Activated CD4-positive, alpha-beta T cell treated with anti-CD3 and anti-CD28 coated beads for 36 hours (primary cell): ENCODE measurements at regions of chr12 and their contacts with region 1.

Region 1: DNA sequence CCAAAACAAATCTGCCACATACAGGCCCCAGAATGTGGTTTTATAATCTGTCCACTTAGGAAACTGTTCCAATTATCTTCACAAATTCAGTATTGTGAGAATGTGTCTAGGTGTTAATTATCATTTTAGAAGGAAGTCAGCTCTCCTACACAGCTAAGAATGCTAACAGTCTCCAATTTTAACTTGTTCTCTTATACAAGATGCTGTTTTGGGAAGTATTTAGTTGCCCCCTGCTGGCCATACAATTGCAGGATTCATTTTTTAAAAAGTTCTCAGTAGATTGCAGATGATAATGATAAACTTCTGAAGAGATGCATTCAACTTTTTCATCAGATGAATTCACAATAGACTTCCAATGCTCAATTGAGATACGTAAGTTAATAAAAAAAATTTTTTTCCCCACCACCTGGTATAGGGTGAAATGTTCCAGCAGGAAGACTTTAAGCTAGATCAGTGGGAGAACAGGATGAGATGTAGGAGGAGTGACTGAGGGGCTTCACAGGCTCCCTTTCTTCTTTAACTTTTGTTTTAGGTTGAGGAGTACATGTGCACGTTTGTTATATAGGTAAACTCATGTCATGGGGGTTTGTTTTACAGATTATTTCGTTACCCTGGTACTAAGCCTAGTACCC is 27.3 kb upstream of the OSBPL8 start:
- DNase-seq: peak; percentile 44
- ATAC-seq: no peak
- H3K4me3 Mint-ChIP-seq: no peak overlapping the region
- H3K27ac Mint-ChIP-seq: no peak overlapping the region
- H3K4me1 Mint-ChIP-seq: no peaks in the 10 kb centered on the region
- H3K27me3 Mint-ChIP-seq: no peaks in the 10 kb centered on the region

Region 2: DNA sequence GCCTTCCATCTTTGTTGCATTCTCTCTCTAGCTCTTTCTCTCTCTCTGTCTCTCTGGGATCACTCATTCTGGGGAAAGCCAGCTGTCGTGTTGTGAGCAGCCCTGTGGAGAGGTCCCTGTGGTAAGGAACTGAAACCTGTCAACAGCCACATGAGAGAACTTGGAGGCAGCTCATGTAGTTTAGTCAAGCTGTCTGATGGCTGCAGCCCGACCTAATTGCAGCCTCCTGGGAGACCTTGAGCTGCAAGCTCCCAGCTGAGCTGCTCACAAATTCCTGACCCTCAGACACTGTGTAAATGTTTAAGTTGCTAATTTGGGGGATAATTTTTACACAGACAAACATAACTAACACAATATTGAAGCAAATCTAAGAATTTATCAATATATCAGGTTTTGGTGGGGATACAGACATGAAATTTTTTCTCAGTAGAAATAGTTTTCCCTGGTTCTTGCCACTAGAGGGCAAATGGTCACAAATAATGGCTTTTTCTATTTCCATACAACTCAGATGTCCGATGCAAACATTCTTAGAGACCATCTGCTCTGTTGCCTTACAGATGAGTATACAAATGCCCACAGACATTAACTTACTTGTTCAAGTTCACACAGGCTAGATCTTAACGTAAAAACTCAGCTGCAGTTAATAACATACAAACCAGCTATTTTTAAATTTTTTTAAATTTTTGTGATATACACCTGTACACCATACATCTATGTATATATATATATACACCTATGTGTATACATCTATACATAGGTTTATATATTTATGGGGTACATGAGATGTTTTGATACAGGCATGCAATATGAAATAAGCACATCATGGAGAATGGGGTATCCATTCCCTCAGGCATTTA is 1060.0 kb before region 1 on chr12:
- CTCF ChIA-PET with region 1: no interaction called
- POLR2A ChIA-PET with region 1: no interaction called
- intact Hi-C with region 1: loop called in 1 of 2 experiments (anchors 5 kb)
- DNase-seq: peak; percentile 35
- ATAC-seq: peak; percentile 69
- H3K4me3 Mint-ChIP-seq: no peak overlapping the region
- H3K27ac Mint-ChIP-seq: no peak overlapping the region
- H3K4me1 Mint-ChIP-seq: peaks cover 6% of the 10 kb centered on the region
- H3K27me3 Mint-ChIP-seq: peaks cover 27% of the 10 kb centered on the region

Region 3: DNA sequence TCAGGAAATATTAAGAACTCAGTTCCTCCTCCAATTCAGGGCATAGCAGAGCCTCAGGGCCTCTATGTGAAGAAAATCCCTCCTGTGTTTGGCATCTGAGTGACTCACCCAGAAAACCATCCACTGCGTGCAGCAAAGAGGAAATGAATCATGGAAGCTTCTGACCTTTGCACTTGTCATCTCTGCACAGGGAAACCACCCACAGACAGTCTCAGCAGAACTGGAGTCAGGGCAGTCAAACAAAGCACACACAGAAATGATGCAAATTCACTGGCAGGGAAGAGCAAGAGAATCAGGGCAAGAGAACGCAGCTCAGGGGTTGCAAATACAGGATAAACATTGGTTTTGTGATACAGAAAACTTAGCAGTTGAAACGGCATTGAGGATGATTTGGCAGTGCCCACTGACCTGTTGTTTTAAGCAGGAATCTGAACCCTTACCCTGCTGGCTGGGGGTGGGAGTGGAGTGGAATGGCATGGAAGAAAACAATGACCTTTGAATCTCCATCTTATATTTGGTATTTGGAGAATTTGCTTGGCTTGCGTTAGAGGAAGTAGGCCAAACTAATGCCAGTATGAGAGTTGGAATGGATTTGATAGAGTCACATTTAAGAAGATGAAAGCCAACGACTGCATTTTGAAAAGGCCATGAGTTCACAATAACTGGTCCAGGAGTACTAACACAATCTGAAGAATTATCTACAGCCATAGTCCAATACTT is 608.8 kb before region 1 on chr12:
- CTCF ChIA-PET with region 1: no interaction called
- POLR2A ChIA-PET with region 1: no interaction called
- intact Hi-C with region 1: no loop called
- DNase-seq: peak; percentile 85
- ATAC-seq: peak; percentile 80
- H3K4me3 Mint-ChIP-seq: peak overlapping the region; percentile 59
- H3K27ac Mint-ChIP-seq: peak overlapping the region; percentile 100
- H3K4me1 Mint-ChIP-seq: peaks cover 69% of the 10 kb centered on the region
- H3K27me3 Mint-ChIP-seq: no peaks in the 10 kb centered on the region

Region 4: DNA sequence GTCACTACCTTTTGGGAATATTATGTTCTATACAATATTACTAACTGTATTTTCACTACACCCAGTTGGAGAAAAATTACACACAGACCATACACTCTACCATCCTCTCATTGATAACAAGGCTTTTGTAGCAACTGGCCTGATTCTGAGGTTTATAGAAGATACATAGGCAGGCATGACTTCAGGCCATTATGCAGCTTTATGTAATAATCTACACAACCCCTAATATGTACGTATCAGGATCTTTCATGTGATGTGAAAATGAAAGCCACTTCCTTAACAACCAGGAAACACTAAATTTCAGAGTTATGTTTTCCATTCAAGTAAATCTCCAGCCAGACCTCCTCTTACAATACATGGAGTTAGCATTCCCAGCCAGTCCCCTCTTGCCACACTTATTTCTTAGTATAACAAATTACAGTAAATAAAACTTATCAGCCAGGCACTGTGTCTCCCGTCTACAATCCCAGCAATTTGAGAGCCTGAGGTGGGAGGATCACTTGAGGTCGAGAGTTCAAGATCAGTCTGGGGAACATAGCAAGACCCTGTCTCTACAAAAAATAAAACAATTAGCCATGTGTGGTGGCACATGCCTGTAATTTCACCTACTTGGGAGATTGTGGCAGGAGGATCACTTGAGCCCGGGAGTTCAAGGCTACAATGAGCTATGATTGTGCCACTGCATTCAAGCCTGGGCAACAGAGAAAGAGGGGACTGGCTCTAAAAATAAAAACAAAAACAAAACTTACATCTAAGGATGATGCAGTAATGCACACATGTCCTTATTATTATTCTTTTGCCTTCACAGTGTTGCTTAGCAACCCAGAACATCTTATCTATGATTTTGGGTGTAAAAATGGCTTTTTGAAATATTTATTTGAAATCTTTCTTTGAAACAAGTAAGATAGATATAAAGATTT is 16.9 kb before region 1 on chr12:
- CTCF ChIA-PET with region 1: interaction called, 10 read pairs
- POLR2A ChIA-PET with region 1: no interaction called
- intact Hi-C with region 1: no loop called
- DNase-seq: no peak
- ATAC-seq: no peak
- H3K4me3 Mint-ChIP-seq: no peak overlapping the region
- H3K27ac Mint-ChIP-seq: no peak overlapping the region
- H3K4me1 Mint-ChIP-seq: peaks cover 9% of the 10 kb centered on the region
- H3K27me3 Mint-ChIP-seq: no peaks in the 10 kb centered on the region